Sigmoid colon (tissue), 7 donors: ENCODE measurements at regions of chr3 and their contacts with region 1.

Region 1: GRCh38 chr3:132722164-132723024 is at the start of gene NPHP3:
- DNase-seq: peak; percentile 99
- H3K4me3 ChIP-seq: peak within 1 kb of the TSS; percentile 64 to 99 (median 89)
- H3K27ac ChIP-seq: peak within 1 kb of the TSS; percentile 97 to 99 (median 98)
- H3K4me1 ChIP-seq: peaks cover 0 to 38% (median 31%) of the 10 kb centered on the region in 4 donors
- H3K27me3 ChIP-seq: no peaks in the 10 kb centered on the region
- CTCF ChIP-seq: no peak
- EP300 ChIP-seq: no peak
- POLR2A ChIP-seq: peak; percentile 55 to 79
- total RNA-seq, gene NPHP3: 38.0 to 76.2 (median 42.8) TPM

Region 2: GRCh38 chr3:131831608-131832007 is 890.8 kb before region 1 on chr3:
- intact Hi-C with region 1: no loop called
- DNase-seq: no peak
- H3K4me3 ChIP-seq: no peak overlapping the region
- H3K27ac ChIP-seq: no peak overlapping the region
- H3K4me1 ChIP-seq: no peaks in the 10 kb centered on the region
- H3K27me3 ChIP-seq: no peaks in the 10 kb centered on the region
- CTCF ChIP-seq: no peak
- EP300 ChIP-seq: no peak
- POLR2A ChIP-seq: no peak

Region 3: DNA sequence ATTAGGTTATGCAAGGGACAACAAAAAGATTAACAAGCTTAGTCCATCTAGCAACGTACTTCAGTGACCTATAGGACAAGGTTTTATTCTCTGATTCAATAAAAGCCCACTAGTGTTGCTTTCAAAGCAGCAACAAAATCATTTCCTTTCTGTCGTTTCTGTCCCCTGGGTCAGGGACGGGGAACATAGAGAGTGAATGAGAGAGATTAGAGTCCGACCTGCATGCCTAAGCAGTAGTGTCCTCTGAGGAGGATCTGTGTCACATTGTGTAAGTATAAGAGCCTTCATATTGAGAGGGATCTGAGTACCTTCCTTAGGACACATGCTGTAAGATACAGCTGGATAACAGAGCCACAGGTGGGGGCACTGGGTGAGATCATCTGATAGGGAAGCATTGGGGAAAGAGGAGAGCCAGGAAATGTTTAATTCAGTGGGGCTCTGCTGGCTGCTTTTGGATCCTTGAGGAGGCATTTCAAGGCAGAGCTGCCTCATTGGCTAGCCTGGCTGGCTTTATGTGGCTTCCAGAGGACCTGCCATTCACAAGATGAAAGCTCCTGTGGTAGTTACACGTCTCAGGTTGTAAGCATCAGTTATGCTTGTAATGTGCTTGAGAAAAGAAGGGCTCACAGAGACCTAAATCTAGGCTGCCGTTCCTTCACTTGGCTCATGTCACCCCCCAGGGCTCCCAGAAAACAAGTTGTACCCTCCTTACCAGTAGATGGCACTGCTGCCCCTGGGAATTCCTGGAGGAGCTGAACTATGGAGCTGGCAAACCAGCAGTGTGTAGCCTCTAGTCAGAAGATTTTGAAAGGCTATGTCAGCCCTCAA is 318.5 kb after region 1 on chr3:
- intact Hi-C with region 1: loop called (anchors 2 kb)
- DNase-seq: peak; percentile 75
- H3K4me3 ChIP-seq: no peak overlapping the region
- H3K27ac ChIP-seq: peak overlapping the region in 1 of 4 donors; percentile 66
- H3K4me1 ChIP-seq: peaks cover 0 to 22% (median 20%) of the 10 kb centered on the region in 4 donors
- H3K27me3 ChIP-seq: peaks cover 0 to 29% (median 12%) of the 10 kb centered on the region in 3 donors
- CTCF ChIP-seq: peak; percentile 32 to 60 (median 48)
- EP300 ChIP-seq: no peak
- POLR2A ChIP-seq: no peak

Region 4: DNA sequence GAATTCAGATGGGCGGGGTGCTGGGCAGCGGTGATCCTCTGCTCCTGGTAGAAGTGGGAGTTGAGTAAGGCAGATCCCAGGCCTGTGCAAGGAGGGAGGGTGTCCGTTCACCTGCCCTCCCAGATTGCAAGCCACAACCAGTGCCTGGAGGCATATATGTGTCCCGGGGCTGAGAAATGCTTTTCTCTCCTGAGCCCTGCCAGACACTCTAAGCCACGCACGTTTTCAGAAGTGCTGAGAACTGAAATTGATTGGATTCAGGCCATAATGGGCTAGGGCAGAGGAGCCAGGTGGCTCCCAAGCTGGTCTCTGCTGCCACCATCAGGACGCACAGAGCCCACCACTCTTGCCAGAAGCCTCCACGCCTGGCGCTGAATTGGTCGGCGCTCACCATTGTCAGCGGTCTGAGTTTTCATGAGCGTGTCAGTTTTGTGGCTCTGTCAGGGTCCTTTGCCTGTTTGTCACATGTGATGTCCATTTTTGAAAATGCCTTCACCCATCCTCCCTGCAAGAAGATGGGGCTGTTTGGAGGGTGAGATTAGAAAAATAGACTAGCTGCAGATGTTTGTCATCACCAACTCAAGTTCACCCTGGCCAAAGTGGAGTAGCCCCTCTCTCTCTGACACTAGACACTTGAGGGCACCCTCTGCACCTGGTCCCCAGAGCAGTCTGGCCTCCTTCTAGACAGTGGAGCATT is 662.1 kb after region 1 on chr3:
- intact Hi-C with region 1: loop called (anchors 2 kb)
- DNase-seq: no peak
- H3K4me3 ChIP-seq: no peak overlapping the region
- H3K27ac ChIP-seq: no peak overlapping the region
- H3K4me1 ChIP-seq: peaks cover 0 to 6% (median 2%) of the 10 kb centered on the region in 4 donors
- H3K27me3 ChIP-seq: no peaks in the 10 kb centered on the region
- CTCF ChIP-seq: peak in 3 of 4 experiments; percentile 13 to 62 (median 23)
- EP300 ChIP-seq: no peak
- POLR2A ChIP-seq: no peak

Region 5: GRCh38 chr3:133661454-133662277 is 939.3 kb after region 1 on chr3 and contains the start of gene TOPBP1:
- intact Hi-C with region 1: loop called (anchors 10 kb)
- DNase-seq: peak; percentile 86
- H3K4me3 ChIP-seq: peak within 1 kb of the TSS; percentile 63 to 93 (median 85)
- H3K27ac ChIP-seq: peak within 1 kb of the TSS; percentile 82 to 86 (median 82)
- H3K4me1 ChIP-seq: peaks cover 0 to 28% (median 12%) of the 10 kb centered on the region in 4 donors
- H3K27me3 ChIP-seq: no peaks in the 10 kb centered on the region
- CTCF ChIP-seq: no peak
- EP300 ChIP-seq: no peak
- POLR2A ChIP-seq: no peak
- total RNA-seq, gene TOPBP1: 14.1 to 30.2 (median 16.8) TPM

Region 6: GRCh38 chr3:133805527-133806475 is 1083.4 kb after region 1 on chr3 and contains the start of gene SRPRB:
- intact Hi-C with region 1: loop called (anchors 10 kb)
- DNase-seq: peak; percentile 96
- H3K4me3 ChIP-seq: peak within 1 kb of the TSS; percentile 77 to 91 (median 84)
- H3K27ac ChIP-seq: peak within 1 kb of the TSS; percentile 71 to 81 (median 77)
- H3K4me1 ChIP-seq: peaks cover 0 to 18% (median 6%) of the 10 kb centered on the region in 4 donors
- H3K27me3 ChIP-seq: no peaks in the 10 kb centered on the region
- CTCF ChIP-seq: no peak
- EP300 ChIP-seq: peak in 1 of 4 donors; percentile 6
- POLR2A ChIP-seq: peak in 1 of 2 donors; percentile 21
- total RNA-seq, gene SRPRB: 10.8 to 20.0 (median 15.8) TPM

Region 7: GRCh38 chr3:133927540-133928066 is 1205.2 kb after region 1 on chr3:
- intact Hi-C with region 1: loop called (anchors 10 kb)
- DNase-seq: no peak
- H3K4me3 ChIP-seq: peak overlapping the region; percentile 29 to 60 (median 54)
- H3K27ac ChIP-seq: peak overlapping the region in 1 of 4 donors; percentile 26
- H3K4me1 ChIP-seq: peaks cover 0 to 14% (median 12%) of the 10 kb centered on the region in 4 donors
- H3K27me3 ChIP-seq: no peaks in the 10 kb centered on the region
- CTCF ChIP-seq: peak; percentile 32 to 84 (median 42)
- EP300 ChIP-seq: no peak
- POLR2A ChIP-seq: no peak

Region 8: DNA sequence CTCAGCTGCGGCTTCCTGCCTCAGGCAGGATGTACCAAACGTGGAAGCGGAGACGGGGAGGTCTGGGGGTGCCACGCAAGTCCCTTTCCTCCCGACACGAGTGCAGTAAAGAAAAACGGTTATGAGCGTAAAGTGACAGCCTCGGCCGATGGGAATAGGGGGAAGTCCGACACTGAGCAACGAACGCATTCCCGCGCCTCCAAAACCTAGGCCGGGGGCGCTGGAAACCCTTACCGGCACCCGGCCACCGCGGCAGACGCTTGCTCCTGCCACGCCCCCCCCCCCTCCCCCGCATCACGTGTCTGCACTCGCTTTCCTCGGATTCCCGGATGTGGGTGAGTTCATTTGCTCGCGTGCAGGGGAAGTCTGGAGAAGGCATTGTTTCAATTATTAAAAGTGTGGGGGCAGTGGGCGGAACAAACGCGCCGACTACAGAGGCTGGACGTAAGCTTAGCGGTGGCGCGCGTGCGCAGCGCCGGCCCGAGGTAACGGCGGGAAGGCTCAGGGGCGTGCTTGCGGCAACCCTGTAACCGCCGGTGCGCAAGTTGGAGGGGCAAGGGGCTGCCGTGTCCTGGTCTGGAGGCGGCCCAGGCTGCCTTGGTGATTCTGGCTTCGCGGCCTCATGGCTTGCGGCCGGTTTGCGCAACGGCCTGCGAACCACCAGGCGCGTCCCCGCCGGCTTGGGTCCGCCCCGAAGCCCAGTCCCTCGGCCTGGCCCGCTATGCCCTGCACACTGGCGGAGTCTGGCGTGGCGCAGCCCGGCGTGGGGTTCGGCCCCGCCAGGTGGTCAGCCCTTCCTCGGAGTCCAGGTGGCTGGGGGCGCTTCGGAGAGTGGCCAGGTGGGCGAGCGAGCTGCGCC is 1763.6 kb after region 1 on chr3 and contains the starts of genes ANAPC13 and CEP63:
- intact Hi-C with region 1: loop called (anchors 5 kb)
- DNase-seq: peak; percentile 98
- H3K4me3 ChIP-seq: peak within 1 kb of the TSS; percentile 59 to 81 (median 75)
- H3K27ac ChIP-seq: peak within 1 kb of the TSS; percentile 94 to 97 (median 96)
- H3K4me1 ChIP-seq: peaks cover 0 to 41% (median 32%) of the 10 kb centered on the region in 4 donors
- H3K27me3 ChIP-seq: no peaks in the 10 kb centered on the region
- CTCF ChIP-seq: no peak
- EP300 ChIP-seq: no peak
- POLR2A ChIP-seq: peak; percentile 35 to 62
- total RNA-seq, gene ANAPC13: 46.7 to 78.1 (median 61.1) TPM
- total RNA-seq, gene CEP63: 22.5 to 33.5 (median 25.6) TPM